ENCODE measurements at regions of chr5 and their contacts with region 1.

Region 1: DNA sequence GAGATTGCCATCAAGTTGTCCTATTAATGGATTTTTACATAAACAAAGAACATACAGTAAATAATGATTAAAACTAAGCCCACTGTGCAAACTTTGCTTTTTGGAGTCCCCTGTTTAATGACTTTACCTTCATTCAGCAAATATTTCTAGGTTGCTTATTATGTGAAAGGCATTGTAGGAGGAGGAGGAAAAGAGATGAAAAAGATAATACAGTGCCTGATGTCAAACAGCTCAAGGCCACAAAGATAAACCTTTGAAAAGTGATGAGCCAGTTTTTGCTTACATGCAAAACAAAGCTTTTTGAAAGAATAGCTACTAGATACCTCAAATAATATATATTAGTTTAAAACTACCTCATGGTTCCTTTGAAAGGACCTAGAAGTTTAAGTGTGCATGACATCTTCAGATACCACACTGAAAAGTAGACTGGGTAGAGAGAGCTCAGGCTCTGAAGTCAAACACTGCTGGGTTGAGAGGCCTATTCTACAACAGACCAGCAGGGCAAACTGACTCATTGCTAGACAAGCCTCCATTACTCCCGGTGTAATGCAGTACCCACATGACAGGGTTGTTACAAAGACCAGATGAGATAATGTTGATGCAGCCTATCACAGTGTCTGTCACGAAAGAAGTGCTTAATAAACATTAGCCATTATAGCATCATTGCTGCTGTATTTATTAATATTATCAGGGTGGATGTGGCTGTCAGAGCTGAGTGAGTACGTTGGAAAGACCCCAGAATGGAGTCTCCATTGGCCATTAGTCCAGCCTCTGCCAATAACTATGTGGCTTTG is 11.8 kb downstream of the DEPDC1B start:
- DNase-seq: no peak
- H3K4me3 Mint-ChIP-seq: no peak overlapping the region
- H3K27ac Mint-ChIP-seq: no peak overlapping the region
- H3K4me1 Mint-ChIP-seq: peaks cover 1% of the 10 kb centered on the region
- H3K27me3 Mint-ChIP-seq: no peaks in the 10 kb centered on the region

Region 2: GRCh38 chr5:60668686-60669304 is 19.3 kb before region 1 on chr5:
- CTCF ChIA-PET with region 1: interaction called, 13 read pairs
- POLR2A ChIA-PET with region 1: no interaction called
- DNase-seq: no peak
- H3K4me3 Mint-ChIP-seq: no peak overlapping the region
- H3K27ac Mint-ChIP-seq: no peak overlapping the region
- H3K4me1 Mint-ChIP-seq: no peaks in the 10 kb centered on the region
- H3K27me3 Mint-ChIP-seq: no peaks in the 10 kb centered on the region

Region 3: GRCh38 chr5:60738461-60738860 is 50.3 kb after region 1 on chr5:
- CTCF ChIA-PET with region 1: no interaction called
- POLR2A ChIA-PET with region 1: no interaction called
- DNase-seq: no peak
- H3K4me3 Mint-ChIP-seq: no peak overlapping the region
- H3K27ac Mint-ChIP-seq: no peak overlapping the region
- H3K4me1 Mint-ChIP-seq: no peaks in the 10 kb centered on the region
- H3K27me3 Mint-ChIP-seq: peaks cover 10% of the 10 kb centered on the region